Endothelial cell of umbilical vein (primary cell): ENCODE measurements at regions of chr2 and their contacts with region 1.

Region 1: DNA sequence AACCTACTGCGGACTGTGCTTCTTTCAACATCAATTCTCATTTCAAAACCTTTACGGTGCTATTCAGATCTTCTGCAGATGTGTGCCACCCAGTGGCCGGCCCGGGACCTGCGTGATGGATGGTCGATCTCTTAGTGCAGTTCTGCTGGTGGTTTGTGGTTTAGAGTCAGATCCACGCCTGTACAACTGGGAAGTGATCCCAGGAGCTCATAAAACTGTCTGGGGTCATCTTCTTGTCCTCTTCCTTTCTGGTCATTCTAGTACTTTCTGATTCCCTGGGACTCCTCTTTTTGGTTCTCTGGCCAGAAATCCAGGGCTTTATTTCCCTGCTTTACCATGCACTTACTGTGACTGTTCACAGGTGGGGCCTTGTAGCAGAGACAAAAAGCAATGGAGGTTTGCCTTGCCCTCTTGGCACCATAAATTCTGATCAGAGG is 15.8 kb upstream of the SELENOI start:
- DNase-seq: peak; percentile 81
- H3K4me3 ChIP-seq: no peak overlapping the region
- H3K27ac ChIP-seq: no peak overlapping the region
- H3K4me1 ChIP-seq: no peaks in the 10 kb centered on the region
- H3K27me3 ChIP-seq: peaks cover 4 to 9% of the 10 kb centered on the region in 2 experiments
- CTCF ChIP-seq: peak; percentile 83 to 90
- POLR2A ChIP-seq: no peak

Region 2: DNA sequence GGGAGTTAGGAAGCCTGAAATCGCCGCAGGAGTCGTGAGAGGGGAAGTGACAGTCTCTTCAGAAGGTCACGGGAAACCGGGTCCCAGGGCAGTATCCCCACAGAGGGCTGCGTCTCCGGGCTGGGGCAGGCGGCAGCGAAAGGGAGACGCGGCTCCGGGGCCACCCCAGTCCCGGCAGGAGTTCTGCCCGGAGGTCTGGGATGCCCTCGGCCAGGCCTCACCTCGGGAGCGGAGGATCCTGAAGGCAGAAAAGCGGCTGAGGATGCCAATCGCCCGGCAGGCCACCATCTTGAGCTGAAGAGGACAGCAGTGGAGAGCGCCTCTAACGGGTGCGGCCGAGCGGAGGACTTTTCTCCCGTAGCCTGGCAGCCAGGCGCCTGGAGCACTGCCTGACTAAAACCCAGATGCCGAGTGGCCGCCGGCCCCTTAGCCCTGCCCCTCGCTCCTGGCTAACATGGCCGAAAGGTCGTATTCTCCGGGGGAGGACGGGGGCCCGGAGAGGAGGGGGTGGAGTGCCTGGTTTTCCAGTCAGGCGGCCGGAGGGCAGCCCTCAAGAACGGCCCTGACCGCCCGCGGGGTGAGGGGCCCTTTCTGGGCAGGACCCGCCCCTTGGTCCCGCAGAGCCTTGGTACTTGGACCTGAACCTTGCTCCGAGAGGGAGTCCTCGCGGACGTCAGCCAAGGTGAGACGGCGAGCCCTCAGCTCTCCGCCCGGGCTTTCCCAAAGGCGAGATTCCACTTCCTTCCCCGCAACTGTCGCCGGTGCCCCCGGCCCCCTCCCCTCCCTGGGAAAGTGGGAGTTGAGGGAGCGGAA is 85.6 kb before region 1 on chr2 and contains the starts of genes HADHA and HADHB:
- CTCF ChIA-PET with region 1: interaction called, 3 read pairs
- POLR2A ChIA-PET with region 1: no interaction called
- dilution Hi-C with region 1: no loop called
- intact Hi-C with region 1: loop called (anchors 1 kb)
- DNase-seq: peak; percentile 94
- H3K4me3 ChIP-seq: peak within 1 kb of the TSS; percentile 80 to 92 (median 85)
- H3K27ac ChIP-seq: peak within 1 kb of the TSS; percentile 94
- H3K4me1 ChIP-seq: peaks cover 19% of the 10 kb centered on the region
- H3K27me3 ChIP-seq: no peaks in the 10 kb centered on the region
- CTCF ChIP-seq: peak in 1 of 2 donors; percentile 34
- POLR2A ChIP-seq: peak; percentile 78
- total RNA-seq, gene HADHA: 151 and 158 TPM in 2 replicates
- total RNA-seq, gene HADHB: 85.6 and 100 TPM in 2 replicates

Region 3: GRCh38 chr2:26316041-26316440 is 14.1 kb before region 1 on chr2:
- CTCF ChIA-PET with region 1: interaction called, 10 read pairs
- POLR2A ChIA-PET with region 1: no interaction called
- dilution Hi-C with region 1: no loop called
- intact Hi-C with region 1: no loop called
- DNase-seq: no peak
- H3K4me3 ChIP-seq: no peak overlapping the region
- H3K27ac ChIP-seq: no peak overlapping the region
- H3K4me1 ChIP-seq: no peaks in the 10 kb centered on the region
- H3K27me3 ChIP-seq: peaks cover 0 to 5% of the 10 kb centered on the region in 2 experiments
- CTCF ChIP-seq: peak in 1 of 2 donors; percentile 13
- POLR2A ChIP-seq: no peak